ENCODE measurements at regions of chr1 and their contacts with region 1.

Region 1: GRCh38 chr1:15178571-15179484 is 25.3 kb downstream of the TMEM51 start:
- DNase-seq: peak; percentile 91
- H3K4me3 ChIP-seq: no peak overlapping the region
- H3K27ac ChIP-seq: peak overlapping the region; percentile 90
- H3K4me1 ChIP-seq: peaks cover 32% of the 10 kb centered on the region
- H3K27me3 ChIP-seq: no peaks in the 10 kb centered on the region
- CTCF ChIP-seq: no peak
- POLR2A ChIP-seq: no peak

Region 2: GRCh38 chr1:15168479-15168878 is 10.3 kb before region 1 on chr1:
- CTCF ChIA-PET with region 1: interaction called, 8 read pairs
- POLR2A ChIA-PET with region 1: no interaction called
- dilution Hi-C with region 1: no loop called
- intact Hi-C with region 1: loop called (anchors 1 kb)
- DNase-seq: peak; percentile 67
- H3K4me3 ChIP-seq: no peak overlapping the region
- H3K27ac ChIP-seq: peak overlapping the region; percentile 25
- H3K4me1 ChIP-seq: peaks cover 3% of the 10 kb centered on the region
- H3K27me3 ChIP-seq: no peaks in the 10 kb centered on the region
- CTCF ChIP-seq: no peak
- POLR2A ChIP-seq: no peak

Region 3: DNA sequence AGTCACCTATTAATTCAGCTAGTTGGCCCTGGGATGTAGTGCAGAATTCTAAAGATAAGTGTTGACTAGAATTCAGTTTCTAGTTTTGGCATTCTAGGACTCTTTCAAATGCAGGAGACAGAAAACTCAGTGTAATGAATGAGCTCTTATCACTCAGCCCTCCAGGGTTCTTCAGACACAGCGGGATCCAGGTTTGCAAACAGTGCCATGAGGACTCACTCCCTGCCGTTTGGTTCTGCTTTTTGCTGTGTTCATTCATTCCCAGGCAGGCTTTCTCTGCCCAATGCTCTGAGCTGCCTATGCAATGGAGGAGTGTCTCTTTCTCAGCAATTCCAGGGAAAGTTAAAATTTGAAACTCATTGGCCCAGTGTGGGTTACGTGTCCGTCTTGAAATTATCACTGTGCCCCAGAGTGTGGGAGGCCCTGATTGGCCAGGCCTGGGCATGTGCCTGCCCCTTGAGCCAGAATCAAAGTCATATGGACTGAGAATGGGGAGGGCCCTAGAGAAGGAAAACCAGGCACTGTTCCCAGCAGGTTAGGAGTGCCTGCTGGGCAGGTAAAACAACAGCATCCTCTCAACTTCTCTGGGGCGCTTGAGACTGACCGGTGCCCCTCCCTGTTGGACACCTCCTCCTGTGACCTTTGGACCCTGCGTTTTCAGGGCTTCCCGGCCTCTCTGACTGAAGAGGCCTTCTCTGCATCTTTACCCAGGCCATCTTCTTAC is 18.1 kb after region 1 on chr1:
- CTCF ChIA-PET with region 1: interaction called, 7 read pairs
- POLR2A ChIA-PET with region 1: interaction called, 3 read pairs
- dilution Hi-C with region 1: no loop called
- intact Hi-C with region 1: loop called (anchors 1 kb)
- DNase-seq: no peak
- H3K4me3 ChIP-seq: no peak overlapping the region
- H3K27ac ChIP-seq: no peak overlapping the region
- H3K4me1 ChIP-seq: peaks cover 14% of the 10 kb centered on the region
- H3K27me3 ChIP-seq: no peaks in the 10 kb centered on the region
- CTCF ChIP-seq: no peak
- POLR2A ChIP-seq: no peak

Region 4: DNA sequence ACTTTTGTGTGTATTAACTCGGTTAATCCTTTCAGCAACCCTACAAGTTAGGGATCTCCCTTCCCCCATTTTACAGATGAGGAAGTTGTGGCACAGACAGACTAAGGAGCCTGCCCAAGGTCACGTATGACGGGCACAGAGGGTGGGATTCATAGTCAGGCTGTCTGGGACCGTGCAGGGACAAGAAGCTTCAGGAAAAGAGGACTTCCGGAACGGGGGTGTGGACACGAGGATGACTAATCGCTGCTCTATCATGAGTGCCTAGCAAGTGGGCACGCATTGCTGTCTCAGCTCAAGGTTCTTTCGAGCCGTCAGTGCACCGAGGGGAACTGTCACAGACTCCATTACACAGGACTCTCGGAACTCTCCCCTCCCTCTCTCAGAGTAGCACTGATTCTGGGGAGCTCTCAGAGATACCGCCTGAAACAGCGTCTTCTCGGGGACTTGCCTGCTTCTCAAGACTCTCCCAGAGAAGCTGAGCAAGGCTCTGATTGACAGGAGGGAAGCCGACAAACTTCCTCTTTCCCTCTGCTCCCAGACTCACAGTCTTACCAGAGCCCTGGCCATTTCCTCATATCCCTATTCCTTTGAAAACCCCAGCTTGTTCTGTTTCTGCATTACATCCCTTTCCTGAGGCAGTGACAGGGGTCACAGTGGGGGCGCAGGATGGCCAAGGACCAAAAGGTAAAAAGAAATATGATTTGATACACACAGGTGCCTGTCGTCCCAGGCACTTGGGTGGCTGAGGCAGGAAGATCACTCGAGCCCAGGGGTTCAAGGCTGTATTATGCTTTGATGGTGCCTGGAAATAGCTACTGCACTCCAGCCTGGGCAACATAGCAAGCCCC is 82.6 kb after region 1 on chr1:
- CTCF ChIA-PET with region 1: interaction called, 3 read pairs
- POLR2A ChIA-PET with region 1: no interaction called
- dilution Hi-C with region 1: no loop called
- intact Hi-C with region 1: loop called (anchors 1 kb)
- DNase-seq: peak; percentile 74
- H3K4me3 ChIP-seq: peak overlapping the region in 2 of 3 experiments; percentile 6 to 25
- H3K27ac ChIP-seq: peak overlapping the region; percentile 78
- H3K4me1 ChIP-seq: peaks cover 23% of the 10 kb centered on the region
- H3K27me3 ChIP-seq: peaks cover 0 to 5% of the 10 kb centered on the region in 2 experiments
- CTCF ChIP-seq: no peak
- POLR2A ChIP-seq: no peak

Region 5: GRCh38 chr1:15272009-15272788 is 93.4 kb after region 1 on chr1:
- CTCF ChIA-PET with region 1: interaction called, 10 read pairs
- POLR2A ChIA-PET with region 1: no interaction called
- dilution Hi-C with region 1: no loop called
- intact Hi-C with region 1: loop called (anchors 1 kb)
- DNase-seq: peak; percentile 72
- H3K4me3 ChIP-seq: no peak overlapping the region
- H3K27ac ChIP-seq: no peak overlapping the region
- H3K4me1 ChIP-seq: no peaks in the 10 kb centered on the region
- H3K27me3 ChIP-seq: no peaks in the 10 kb centered on the region
- CTCF ChIP-seq: peak; percentile 76 to 79
- POLR2A ChIP-seq: no peak